ENCODE measurements at regions of chr12 and their contacts with region 1.

Region 1: GRCh38 chr12:48936379-48936979 is 11.2 kb upstream of the FKBP11 start:
- H3K4me3 Mint-ChIP-seq: no peak overlapping the region
- H3K27ac Mint-ChIP-seq: no peak overlapping the region
- H3K4me1 Mint-ChIP-seq: peaks cover 61% of the 10 kb centered on the region
- H3K27me3 Mint-ChIP-seq: no peaks in the 10 kb centered on the region

Region 2: DNA sequence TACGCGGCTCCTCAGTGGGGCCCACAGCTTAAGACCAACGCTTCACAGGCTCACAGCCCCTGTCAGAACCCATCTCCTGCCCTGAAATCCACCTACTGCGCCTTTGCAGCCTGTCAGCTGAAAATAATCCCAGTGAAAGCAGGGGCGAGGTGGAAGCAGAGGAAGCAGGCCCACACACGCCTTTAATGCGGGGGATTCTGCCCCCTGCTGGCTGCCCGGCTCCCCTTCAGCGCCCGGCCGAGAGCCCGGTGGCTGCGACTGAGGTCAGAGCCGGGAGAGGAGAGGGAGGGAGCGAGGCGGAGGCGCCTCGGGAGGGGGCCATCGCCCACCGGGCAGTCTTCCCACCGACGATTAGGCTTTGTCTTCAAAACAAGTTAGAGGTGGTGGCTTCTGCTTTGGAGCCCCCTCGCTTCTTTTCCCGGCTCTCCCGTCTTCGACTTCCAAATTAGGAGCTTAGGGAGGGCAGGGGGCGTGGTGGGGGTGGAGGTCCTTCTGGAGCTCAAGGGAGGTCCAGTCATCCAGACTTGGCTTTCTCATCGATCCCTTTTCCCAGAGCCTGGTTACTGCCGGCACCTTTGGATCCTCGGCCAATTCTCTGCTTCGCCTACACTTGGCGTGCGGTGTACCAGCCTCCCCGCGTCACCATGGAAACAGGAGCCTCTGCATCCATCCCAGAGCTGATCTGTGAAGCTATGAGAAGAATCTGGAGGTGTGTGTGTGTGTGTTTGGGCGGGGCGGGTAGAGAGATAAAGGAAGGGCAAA is 45.6 kb before region 1 on chr12:
- intact Hi-C with region 1: loop called (anchors 1 kb)
- H3K4me3 Mint-ChIP-seq: peak overlapping the region; percentile 11
- H3K27ac Mint-ChIP-seq: no peak overlapping the region
- H3K4me1 Mint-ChIP-seq: peaks cover 5% of the 10 kb centered on the region
- H3K27me3 Mint-ChIP-seq: peaks cover 36% of the 10 kb centered on the region

Region 3: DNA sequence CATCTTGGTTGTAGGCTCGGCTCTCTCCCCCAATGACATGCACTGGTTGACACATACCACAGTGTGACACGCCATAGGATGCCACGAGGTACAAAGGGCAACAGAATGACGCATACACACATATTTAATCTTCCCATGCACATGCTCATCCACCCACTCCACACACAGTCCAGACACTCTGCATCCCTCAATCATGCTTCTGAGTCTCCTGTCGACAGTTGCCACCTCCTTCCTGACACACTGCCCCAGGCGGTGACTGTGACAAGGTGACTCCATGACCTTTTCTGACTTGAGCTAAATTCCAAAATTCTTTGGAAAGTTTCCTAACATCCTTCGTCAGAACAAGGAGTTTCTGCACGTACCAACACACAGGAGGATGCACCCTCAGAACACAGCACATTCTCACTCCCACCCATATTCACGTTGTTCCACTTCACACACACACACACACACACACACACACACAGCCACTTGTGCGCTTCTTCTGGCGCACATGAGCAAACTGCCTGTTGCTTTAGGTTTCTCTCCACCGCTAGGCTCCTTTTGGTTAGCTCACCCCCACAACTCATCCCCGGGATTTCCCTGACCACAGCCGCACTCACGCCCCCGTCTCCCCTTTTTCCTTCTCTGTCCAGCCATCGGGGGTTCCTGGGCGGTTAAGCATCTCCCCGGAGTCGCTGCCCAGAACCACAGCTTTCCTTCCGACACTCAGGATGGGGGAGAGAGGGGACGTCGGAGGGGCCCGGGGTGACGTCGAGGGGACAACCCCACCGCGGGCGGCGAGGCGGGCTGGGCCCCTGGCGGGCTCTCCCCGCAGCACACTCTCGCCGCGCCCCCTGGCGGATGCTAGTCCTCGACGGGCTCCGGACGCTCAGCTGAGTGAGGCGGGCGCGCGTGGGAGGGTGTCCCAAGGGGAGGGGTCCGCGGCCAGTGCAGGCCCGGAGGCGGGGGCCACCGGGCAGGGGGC is 41.1 kb after region 1 on chr12:
- intact Hi-C with region 1: loop called (anchors 5 kb)
- H3K4me3 Mint-ChIP-seq: peak overlapping the region; percentile 64
- H3K27ac Mint-ChIP-seq: no peak overlapping the region
- H3K4me1 Mint-ChIP-seq: peaks cover 66% of the 10 kb centered on the region
- H3K27me3 Mint-ChIP-seq: peaks cover 97% of the 10 kb centered on the region

Measured in dendritic cell treated with granulocyte-macrophage colony-stimulating factor and Interleukin-4, amounts not matched to agents 40 ng/mL and 50 ng/mL, for 4 days (primary cell).